AG04450 (cell line): ENCODE measurements at regions of chr6 and their contacts with region 1.

Region 1: GRCh38 chr6:158686791-158687381 is 37.0 kb downstream of the SYTL3 start:
- DNase-seq: no peak
- H3K4me3 ChIP-seq: no peak overlapping the region
- H3K27ac ChIP-seq: no peak overlapping the region
- H3K27me3 ChIP-seq: no peaks in the 10 kb centered on the region
- CTCF ChIP-seq: no peak

Region 2: GRCh38 chr6:158213925-158214674 is 472.8 kb before region 1 on chr6:
- CTCF ChIA-PET with region 1: interaction called, 84 read pairs
- POLR2A ChIA-PET with region 1: no interaction called
- DNase-seq: peak; percentile 53
- H3K4me3 ChIP-seq: no peak overlapping the region
- H3K27ac ChIP-seq: no peak overlapping the region
- H3K27me3 ChIP-seq: no peaks in the 10 kb centered on the region
- CTCF ChIP-seq: peak; percentile 85

Region 3: GRCh38 chr6:158644231-158645063 is 42.4 kb before region 1 on chr6 and contains the start of gene DYNLT1:
- CTCF ChIA-PET with region 1: interaction called, 28 read pairs
- POLR2A ChIA-PET with region 1: no interaction called
- DNase-seq: no peak
- H3K4me3 ChIP-seq: peak within 1 kb of the TSS; percentile 97
- H3K27ac ChIP-seq: peak within 1 kb of the TSS; percentile 86
- H3K27me3 ChIP-seq: no peaks in the 10 kb centered on the region
- CTCF ChIP-seq: no peak
- polyA plus RNA-seq, gene DYNLT1: 414 and 422 TPM in 2 replicates

Region 4: DNA sequence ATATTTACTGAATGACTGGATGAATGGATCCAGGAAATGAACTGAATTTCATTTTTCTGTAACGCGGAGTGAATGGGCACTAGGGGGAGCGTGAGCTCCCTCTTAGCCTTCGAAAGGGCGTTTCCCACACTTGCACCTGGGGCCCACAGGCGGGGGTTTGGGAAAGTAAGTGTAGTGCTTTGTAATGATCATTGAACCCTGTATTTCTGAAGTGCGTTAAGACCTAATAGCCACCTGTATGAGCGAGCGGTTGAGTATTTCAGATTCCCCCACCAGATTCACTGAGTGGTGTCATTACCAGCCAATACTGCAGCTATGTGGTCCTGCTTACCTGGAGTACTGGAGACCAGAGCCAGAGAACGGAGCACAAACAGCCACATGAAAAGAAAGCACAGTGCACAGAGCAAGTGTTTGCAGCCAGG is 26.5 kb before region 1 on chr6:
- CTCF ChIA-PET with region 1: interaction called, 30 read pairs
- POLR2A ChIA-PET with region 1: interaction called, 11 read pairs
- DNase-seq: no peak
- H3K4me3 ChIP-seq: no peak overlapping the region
- H3K27ac ChIP-seq: no peak overlapping the region
- H3K27me3 ChIP-seq: peaks cover 2% of the 10 kb centered on the region
- CTCF ChIP-seq: peak; percentile 70

Region 5: GRCh38 chr6:158718461-158719046 is 31.7 kb after region 1 on chr6:
- CTCF ChIA-PET with region 1: interaction called, 11 read pairs
- POLR2A ChIA-PET with region 1: no interaction called
- DNase-seq: no peak
- H3K4me3 ChIP-seq: no peak overlapping the region
- H3K27ac ChIP-seq: no peak overlapping the region
- H3K27me3 ChIP-seq: no peaks in the 10 kb centered on the region
- CTCF ChIP-seq: peak; percentile 57